GM12878 (cell line): ENCODE measurements at regions of chr7 and their contacts with region 1.

Region 1: GRCh38 chr7:41881331-41882130 is 178.6 kb upstream of the INHBA start:
- DNase-seq: peak; percentile 98
- ATAC-seq: peak; percentile 90
- H3K4me3 ChIP-seq: peak overlapping the region; percentile 22; the same call in 1 of the 2 replicates
- H3K27ac ChIP-seq: peak overlapping the region; percentile 92
- H3K4me1 ChIP-seq: peaks cover 32% of the 10 kb centered on the region
- H3K27me3 ChIP-seq: no peaks in the 10 kb centered on the region
- CTCF ChIP-seq: no peak
- EP300 ChIP-seq: peak; percentile 99 to 100
- POLR2A ChIP-seq: no peak
- RAD21 ChIP-seq: no peak

Region 2: GRCh38 chr7:41107668-41108448 is 773.7 kb before region 1 on chr7:
- CTCF ChIA-PET with region 1: no interaction called
- POLR2A ChIA-PET with region 1: no interaction called
- RAD21 ChIA-PET with region 1: no interaction called
- SMC1A ChIA-PET with region 1: no interaction called
- in situ Hi-C with region 1: no loop called
- intact Hi-C with region 1: loop called (anchors 10 kb)
- DNase-seq: peak; percentile 4
- ATAC-seq: peak; percentile 71
- H3K4me3 ChIP-seq: no peak overlapping the region
- H3K27ac ChIP-seq: no peak overlapping the region
- H3K4me1 ChIP-seq: no peaks in the 10 kb centered on the region
- H3K27me3 ChIP-seq: no peaks in the 10 kb centered on the region
- CTCF ChIP-seq: no peak
- EP300 ChIP-seq: peak in 1 of 2 experiments; percentile 21; a peak in 1 of 4 replicates
- POLR2A ChIP-seq: no peak
- RAD21 ChIP-seq: no peak

Region 3: GRCh38 chr7:41637049-41637448 is 244.5 kb before region 1 on chr7:
- CTCF ChIA-PET with region 1: no interaction called
- POLR2A ChIA-PET with region 1: no interaction called
- RAD21 ChIA-PET with region 1: no interaction called
- SMC1A ChIA-PET with region 1: no interaction called
- in situ Hi-C with region 1: no loop called
- intact Hi-C with region 1: no loop called
- DNase-seq: no peak
- ATAC-seq: no peak
- H3K4me3 ChIP-seq: no peak overlapping the region
- H3K27ac ChIP-seq: no peak overlapping the region
- H3K4me1 ChIP-seq: no peaks in the 10 kb centered on the region
- H3K27me3 ChIP-seq: no peaks in the 10 kb centered on the region
- CTCF ChIP-seq: no peak
- EP300 ChIP-seq: no peak
- POLR2A ChIP-seq: no peak
- RAD21 ChIP-seq: no peak

Region 4: GRCh38 chr7:41705109-41705901 is 176.2 kb before region 1 on chr7:
- CTCF ChIA-PET with region 1: interaction called, 4 read pairs
- POLR2A ChIA-PET with region 1: no interaction called
- RAD21 ChIA-PET with region 1: interaction called, 18 read pairs
- SMC1A ChIA-PET with region 1: interaction called, 12 read pairs
- in situ Hi-C with region 1: no loop called
- intact Hi-C with region 1: loop called (anchors 10 kb)
- DNase-seq: peak; percentile 50
- ATAC-seq: peak; percentile 98
- H3K4me3 ChIP-seq: peak overlapping the region; percentile 54; the same call in 1 of the 2 replicates
- H3K27ac ChIP-seq: no peak overlapping the region
- H3K4me1 ChIP-seq: peaks cover 11% of the 10 kb centered on the region
- H3K27me3 ChIP-seq: no peaks in the 10 kb centered on the region
- CTCF ChIP-seq: peak; percentile 68 to 88 (median 82)
- EP300 ChIP-seq: peak in 1 of 2 experiments; percentile 11; a peak in 1 of 4 replicates
- POLR2A ChIP-seq: no peak
- RAD21 ChIP-seq: peak; percentile 95

Region 5: GRCh38 chr7:41809940-41810576 is 71.5 kb before region 1 on chr7:
- CTCF ChIA-PET with region 1: interaction called, 4 read pairs
- POLR2A ChIA-PET with region 1: interaction called, 11 read pairs
- RAD21 ChIA-PET with region 1: interaction called, 36 read pairs
- SMC1A ChIA-PET with region 1: interaction called, 33 read pairs
- in situ Hi-C with region 1: no loop called
- intact Hi-C with region 1: loop called (anchors 5 kb)
- DNase-seq: peak; percentile 84
- ATAC-seq: peak; percentile 95
- H3K4me3 ChIP-seq: no peak overlapping the region
- H3K27ac ChIP-seq: peak overlapping the region; percentile 49
- H3K4me1 ChIP-seq: peaks cover 25% of the 10 kb centered on the region
- H3K27me3 ChIP-seq: no peaks in the 10 kb centered on the region
- CTCF ChIP-seq: no peak
- EP300 ChIP-seq: peak; percentile 56 to 64; a peak in 2 of 4 replicates
- POLR2A ChIP-seq: no peak
- RAD21 ChIP-seq: no peak

Region 6: GRCh38 chr7:41870461-41871138 is 10.9 kb before region 1 on chr7:
- CTCF ChIA-PET with region 1: interaction called, 15 read pairs
- POLR2A ChIA-PET with region 1: interaction called, 11 read pairs
- RAD21 ChIA-PET with region 1: interaction called, 68 read pairs
- SMC1A ChIA-PET with region 1: interaction called, 86 read pairs
- in situ Hi-C with region 1: no loop called
- intact Hi-C with region 1: no loop called
- DNase-seq: peak; percentile 53
- ATAC-seq: peak; percentile 89
- H3K4me3 ChIP-seq: no peak overlapping the region
- H3K27ac ChIP-seq: peak overlapping the region; percentile 9; the same call in 1 of the 2 replicates
- H3K4me1 ChIP-seq: peaks cover 3% of the 10 kb centered on the region; the same call in 1 of the 2 replicates
- H3K27me3 ChIP-seq: no peaks in the 10 kb centered on the region
- CTCF ChIP-seq: no peak
- EP300 ChIP-seq: peak; percentile 45 to 49; a peak in 2 of 4 replicates
- POLR2A ChIP-seq: no peak
- RAD21 ChIP-seq: no peak

Region 7: DNA sequence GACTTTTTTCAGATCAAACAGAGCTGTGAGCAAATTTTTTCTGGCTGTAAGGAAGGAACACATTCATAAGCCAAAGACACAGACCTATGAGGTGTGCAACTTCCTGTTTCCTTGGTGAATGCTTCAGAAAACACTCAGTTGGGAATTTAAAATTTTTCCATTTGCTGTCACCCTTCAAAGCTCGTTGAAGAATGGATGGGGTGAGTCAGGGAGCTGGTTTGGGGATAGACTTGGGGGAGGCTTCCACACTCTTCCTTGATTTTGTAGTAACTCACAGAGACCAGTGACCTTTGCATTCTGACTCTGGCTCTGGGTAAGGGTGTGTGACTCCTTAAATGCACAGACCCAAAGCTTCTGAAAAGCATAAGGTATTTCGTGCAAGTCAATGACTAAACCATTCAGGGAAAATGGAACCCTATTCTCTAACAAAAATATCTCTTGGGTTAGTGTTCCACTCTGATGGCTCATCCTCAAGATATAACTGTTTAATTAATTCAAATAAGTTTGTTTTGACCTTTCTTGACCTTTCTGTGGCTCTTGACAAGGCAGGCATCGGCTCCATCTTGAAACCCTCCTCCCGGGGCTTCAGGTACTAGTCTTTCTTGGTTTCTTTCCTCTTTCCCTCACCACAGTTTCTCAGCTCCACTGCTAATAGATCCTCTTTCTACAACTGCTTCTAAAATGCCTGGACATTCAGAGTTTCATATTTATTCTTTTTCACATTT is 49.2 kb after region 1 on chr7:
- CTCF ChIA-PET with region 1: no interaction called
- POLR2A ChIA-PET with region 1: no interaction called
- RAD21 ChIA-PET with region 1: interaction called, 10 read pairs
- SMC1A ChIA-PET with region 1: interaction called, 9 read pairs
- in situ Hi-C with region 1: no loop called
- intact Hi-C with region 1: no loop called
- DNase-seq: no peak
- ATAC-seq: no peak
- H3K4me3 ChIP-seq: no peak overlapping the region
- H3K27ac ChIP-seq: no peak overlapping the region
- H3K4me1 ChIP-seq: peaks cover 3% of the 10 kb centered on the region; the same call in 1 of the 2 replicates
- H3K27me3 ChIP-seq: no peaks in the 10 kb centered on the region
- CTCF ChIP-seq: no peak
- EP300 ChIP-seq: no peak
- POLR2A ChIP-seq: no peak
- RAD21 ChIP-seq: no peak